PC-9 (cell line): ENCODE measurements at regions of chr4 and their contacts with region 1.

Region 1: DNA sequence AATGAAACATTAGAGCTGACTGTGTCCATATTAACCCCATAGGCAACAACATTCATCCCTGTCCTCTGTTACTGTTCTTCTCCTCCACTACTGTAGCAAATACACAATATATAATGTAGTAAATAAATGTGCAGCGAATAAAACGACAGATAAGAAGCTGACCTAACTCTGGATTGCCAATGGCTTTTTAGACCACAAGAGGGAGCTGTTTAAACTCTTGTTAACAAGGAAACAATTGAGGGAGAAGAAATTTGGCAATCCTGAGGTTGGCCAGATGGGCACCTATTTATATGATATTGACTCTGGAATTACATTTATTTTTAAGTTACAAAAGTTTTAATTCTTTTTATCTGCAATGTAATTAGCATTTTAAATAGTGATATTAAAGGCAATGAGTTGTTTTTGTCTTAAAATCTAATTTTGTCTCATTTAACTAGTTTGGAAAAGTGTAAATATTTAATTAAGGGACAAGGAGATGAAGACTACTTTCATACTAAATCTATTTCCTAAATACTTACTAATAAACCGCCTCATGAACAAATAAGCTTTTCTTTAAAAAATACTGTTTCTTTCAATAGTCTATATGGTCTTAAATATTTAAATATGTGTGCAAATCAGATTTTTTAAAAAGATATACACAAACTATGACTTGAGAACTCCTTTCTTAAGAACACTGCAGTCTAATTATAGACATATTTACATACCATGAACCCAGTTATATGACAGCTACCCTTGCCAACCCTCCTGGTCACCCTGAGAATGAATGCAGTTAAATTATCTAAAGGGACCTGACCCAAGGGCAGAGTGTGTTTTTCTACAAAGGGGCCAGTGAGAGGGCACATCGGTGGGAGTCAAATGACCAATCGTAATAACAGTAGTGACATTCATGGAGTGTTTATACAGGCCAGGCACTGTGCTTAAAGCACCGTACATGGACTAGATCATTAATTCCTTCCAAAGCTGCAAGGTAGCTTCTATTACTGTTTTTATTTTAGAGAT is 52.9 kb upstream of the HPF1 start:
- DNase-seq: peak; percentile 25 to 56
- H3K4me3 ChIP-seq: no peak overlapping the region
- H3K27ac ChIP-seq: no peak overlapping the region
- H3K4me1 ChIP-seq: no peaks in the 10 kb centered on the region
- H3K27me3 ChIP-seq: no peaks in the 10 kb centered on the region
- CTCF ChIP-seq: peak; percentile 80

Region 2: GRCh38 chr4:169612871-169613859 is 197.5 kb before region 1 on chr4:
- CTCF ChIA-PET with region 1: interaction called, 5 read pairs
- POLR2A ChIA-PET with region 1: no interaction called
- intact Hi-C with region 1: loop called (anchors 2 kb)
- DNase-seq: peak; percentile 73
- H3K4me3 ChIP-seq: peak overlapping the region; percentile 84
- H3K27ac ChIP-seq: peak overlapping the region; percentile 82
- H3K4me1 ChIP-seq: peaks cover 20% of the 10 kb centered on the region
- H3K27me3 ChIP-seq: no peaks in the 10 kb centered on the region
- CTCF ChIP-seq: peak; percentile 77

Region 3: GRCh38 chr4:169940450-169940849 is 129.8 kb after region 1 on chr4:
- CTCF ChIA-PET with region 1: interaction called, 3 read pairs
- POLR2A ChIA-PET with region 1: no interaction called
- intact Hi-C with region 1: loop called (anchors 5 kb)
- DNase-seq: peak in 1 of 2 experiments; percentile 3
- H3K4me3 ChIP-seq: no peak overlapping the region
- H3K27ac ChIP-seq: no peak overlapping the region
- H3K4me1 ChIP-seq: peaks cover 13% of the 10 kb centered on the region
- H3K27me3 ChIP-seq: no peaks in the 10 kb centered on the region
- CTCF ChIP-seq: no peak

Region 4: GRCh38 chr4:170008371-170008770 is 197.7 kb after region 1 on chr4:
- CTCF ChIA-PET with region 1: no interaction called
- POLR2A ChIA-PET with region 1: no interaction called
- intact Hi-C with region 1: loop called (anchors 1 kb)
- DNase-seq: peak in 1 of 2 experiments; percentile 9
- H3K4me3 ChIP-seq: no peak overlapping the region
- H3K27ac ChIP-seq: no peak overlapping the region
- H3K4me1 ChIP-seq: no peaks in the 10 kb centered on the region
- H3K27me3 ChIP-seq: no peaks in the 10 kb centered on the region
- CTCF ChIP-seq: no peak

Region 5: DNA sequence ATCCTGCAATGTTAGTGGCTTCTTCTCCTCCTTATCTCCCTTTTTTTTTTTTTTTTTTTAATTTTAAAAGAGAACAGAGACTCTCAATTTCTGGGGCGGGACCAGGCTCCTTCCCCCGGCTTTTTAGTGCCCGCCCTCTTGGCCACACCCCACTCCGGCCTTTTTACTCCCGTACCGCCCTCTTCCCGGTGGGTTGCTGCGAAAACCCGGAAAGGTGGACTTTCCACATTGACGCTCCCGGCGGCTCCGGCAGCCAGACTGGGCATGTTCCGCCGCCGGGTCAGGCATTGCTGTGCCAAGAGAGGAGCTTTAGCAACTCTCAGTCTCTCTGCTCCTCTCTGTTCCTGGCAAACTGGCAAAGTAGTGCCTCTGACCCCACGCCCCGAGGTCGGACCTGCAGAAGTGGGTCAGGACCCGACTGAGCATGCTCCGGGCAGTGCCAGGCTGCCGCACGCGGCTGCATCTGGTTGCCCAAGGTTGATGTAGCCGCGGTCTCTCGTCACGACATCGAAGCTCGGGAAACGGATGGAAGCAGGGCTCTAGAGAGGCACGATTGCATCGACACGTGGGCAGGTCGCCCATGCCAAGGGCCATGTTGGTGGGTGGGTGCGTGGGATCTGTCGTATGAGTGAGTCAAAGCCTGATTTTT is 216.7 kb after region 1 on chr4:
- CTCF ChIA-PET with region 1: interaction called, 3 read pairs
- POLR2A ChIA-PET with region 1: interaction called, 3 read pairs
- intact Hi-C with region 1: loop called (anchors 1 kb)
- DNase-seq: peak; percentile 63 to 92
- H3K4me3 ChIP-seq: peak overlapping the region; percentile 75; the same call in 1 of the 2 replicates
- H3K27ac ChIP-seq: peak overlapping the region; percentile 50; the same call in 1 of the 2 replicates
- H3K4me1 ChIP-seq: no peaks in the 10 kb centered on the region
- H3K27me3 ChIP-seq: no peaks in the 10 kb centered on the region
- CTCF ChIP-seq: no peak

Region 6: DNA sequence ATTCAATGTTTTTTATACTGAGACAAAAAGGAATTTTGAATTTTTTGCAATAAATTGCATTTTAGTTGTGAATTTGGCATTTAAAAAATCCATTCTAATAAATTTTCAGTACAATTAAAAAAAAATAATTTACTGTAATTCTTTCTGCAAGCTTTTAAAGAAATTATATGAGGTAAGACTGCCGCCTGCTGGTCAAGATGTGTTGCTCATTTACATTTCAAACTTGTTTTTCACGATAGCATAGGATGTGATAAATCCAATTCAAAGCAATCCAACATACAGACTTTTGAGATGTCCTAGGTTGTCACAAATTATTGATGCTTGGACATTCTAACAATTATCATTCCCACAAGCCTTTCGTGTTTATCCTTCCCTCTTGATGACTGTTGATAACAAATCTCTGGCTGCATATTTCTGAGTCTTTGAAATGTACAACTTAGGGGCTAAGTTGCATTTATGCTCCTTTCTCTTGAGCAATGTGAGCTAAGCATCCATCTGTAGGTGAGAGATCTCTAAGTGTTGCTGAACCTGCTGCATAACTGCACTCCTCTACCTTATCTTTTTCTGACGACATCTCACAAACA is 237.2 kb after region 1 on chr4:
- CTCF ChIA-PET with region 1: interaction called, 8 read pairs
- POLR2A ChIA-PET with region 1: no interaction called
- intact Hi-C with region 1: loop called (anchors 1 kb)
- DNase-seq: peak in 1 of 2 experiments; percentile 41
- H3K4me3 ChIP-seq: no peak overlapping the region
- H3K27ac ChIP-seq: no peak overlapping the region
- H3K4me1 ChIP-seq: no peaks in the 10 kb centered on the region
- H3K27me3 ChIP-seq: no peaks in the 10 kb centered on the region
- CTCF ChIP-seq: peak; percentile 78

Region 7: GRCh38 chr4:170089668-170090351 is 279.2 kb after region 1 on chr4 and contains the start of gene AADAT:
- CTCF ChIA-PET with region 1: no interaction called
- POLR2A ChIA-PET with region 1: no interaction called
- intact Hi-C with region 1: loop called (anchors 1 kb)
- DNase-seq: peak; percentile 44 to 77
- H3K4me3 ChIP-seq: peak within 1 kb of the TSS; percentile 67
- H3K27ac ChIP-seq: no peak within 1 kb of the TSS
- H3K4me1 ChIP-seq: 0 out of 2 replicates have a peak, but pooled peaks cover 5% of the 10 kb centered on the region
- H3K27me3 ChIP-seq: no peaks in the 10 kb centered on the region
- CTCF ChIP-seq: peak; percentile 71
- total RNA-seq, gene AADAT: 2.6 and 3.2 TPM in 2 replicates